Endothelial cell of umbilical vein (primary cell): ENCODE measurements at regions of chr2 and their contacts with region 1.

Region 1: GRCh38 chr2:73828818-73829570 is at the start of gene STAMBP:
- DNase-seq: peak; percentile 96
- H3K4me3 ChIP-seq: peak within 1 kb of the TSS; percentile 15 to 91 (median 74)
- H3K27ac ChIP-seq: peak within 1 kb of the TSS; percentile 79
- H3K4me1 ChIP-seq: peaks cover 17% of the 10 kb centered on the region
- H3K27me3 ChIP-seq: peaks cover 5 to 6% of the 10 kb centered on the region in 2 experiments
- CTCF ChIP-seq: no peak
- POLR2A ChIP-seq: peak; percentile 76
- total RNA-seq, gene STAMBP: 19.8 and 21.3 TPM in 2 replicates

Region 2: DNA sequence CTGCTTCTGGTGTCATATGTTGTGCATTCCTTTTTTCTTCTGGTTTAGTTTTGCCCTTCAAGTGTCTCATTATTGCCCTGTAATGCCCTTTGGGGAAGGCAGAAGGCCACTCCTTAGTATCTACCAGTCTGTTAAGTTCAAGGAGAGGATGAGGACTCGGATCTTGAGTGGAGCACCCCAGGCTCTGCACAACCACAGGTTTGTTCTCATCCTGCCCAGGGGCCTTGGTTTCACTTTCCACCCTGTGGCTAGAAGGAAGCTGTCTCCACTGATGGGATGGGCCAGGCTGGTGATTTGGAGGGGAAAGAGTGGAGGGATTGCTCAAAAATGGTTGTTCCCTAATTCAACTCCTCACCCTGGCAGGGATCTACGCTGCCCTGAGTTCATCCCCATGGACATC is 686.1 kb before region 1 on chr2:
- CTCF ChIA-PET with region 1: no interaction called
- POLR2A ChIA-PET with region 1: no interaction called
- dilution Hi-C with region 1: no loop called
- intact Hi-C with region 1: no loop called
- DNase-seq: no peak
- H3K4me3 ChIP-seq: no peak overlapping the region
- H3K27ac ChIP-seq: no peak overlapping the region
- H3K4me1 ChIP-seq: no peaks in the 10 kb centered on the region
- H3K27me3 ChIP-seq: no peaks in the 10 kb centered on the region
- CTCF ChIP-seq: no peak
- POLR2A ChIP-seq: no peak

Region 3: DNA sequence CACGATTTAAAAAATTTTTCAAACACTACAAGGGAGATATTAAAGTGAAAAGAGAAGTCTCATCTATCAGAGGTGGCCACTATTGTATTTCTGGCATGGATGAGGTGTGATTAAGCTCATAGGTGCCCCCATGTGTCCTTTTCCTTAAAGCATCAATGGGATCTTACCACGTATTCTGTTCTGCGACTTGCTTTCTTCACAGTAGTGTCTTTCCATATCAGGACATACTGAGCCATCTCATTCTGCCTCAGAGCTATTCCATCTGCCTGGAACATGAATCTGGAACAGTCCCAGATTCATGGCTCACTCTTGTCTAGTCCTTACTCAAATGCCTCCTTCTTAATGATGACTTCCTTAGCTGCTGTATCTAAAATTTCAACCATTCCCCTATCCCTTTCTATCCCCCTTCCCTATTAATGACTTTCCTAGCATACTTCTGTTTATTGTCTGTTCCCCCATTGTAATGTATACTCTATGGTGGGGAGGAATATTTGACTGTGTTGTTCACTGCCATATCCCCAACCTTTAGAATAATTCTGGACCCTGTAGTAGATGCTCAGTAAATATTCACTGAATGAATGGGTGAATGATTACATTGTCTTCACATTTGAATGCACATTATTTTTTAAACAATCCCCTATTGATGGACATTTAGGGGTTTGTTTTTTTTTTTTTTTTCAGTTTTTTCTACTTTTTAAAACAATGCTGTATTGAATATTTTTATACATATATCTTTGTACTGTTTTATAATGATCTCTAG is 10.8 kb after region 1 on chr2:
- CTCF ChIA-PET with region 1: interaction called, 10 read pairs
- POLR2A ChIA-PET with region 1: no interaction called
- dilution Hi-C with region 1: no loop called
- intact Hi-C with region 1: no loop called
- DNase-seq: no peak
- H3K4me3 ChIP-seq: no peak overlapping the region
- H3K27ac ChIP-seq: no peak overlapping the region
- H3K4me1 ChIP-seq: no peaks in the 10 kb centered on the region
- H3K27me3 ChIP-seq: no peaks in the 10 kb centered on the region
- CTCF ChIP-seq: no peak
- POLR2A ChIP-seq: no peak

Region 4: GRCh38 chr2:73926493-73927338 is 97.7 kb after region 1 on chr2 and contains the start of gene DGUOK:
- CTCF ChIA-PET with region 1: interaction called, 4 read pairs
- POLR2A ChIA-PET with region 1: no interaction called
- dilution Hi-C with region 1: no loop called
- intact Hi-C with region 1: loop called (anchors 1 kb)
- DNase-seq: peak; percentile 98
- H3K4me3 ChIP-seq: peak within 1 kb of the TSS; percentile 48 to 95 (median 91)
- H3K27ac ChIP-seq: peak within 1 kb of the TSS; percentile 98
- H3K4me1 ChIP-seq: peaks cover 13% of the 10 kb centered on the region
- H3K27me3 ChIP-seq: peaks cover 8 to 9% of the 10 kb centered on the region in 2 experiments
- CTCF ChIP-seq: no peak
- POLR2A ChIP-seq: peak; percentile 84
- total RNA-seq, gene DGUOK: 51.8 and 58.8 TPM in 2 replicates

Region 5: DNA sequence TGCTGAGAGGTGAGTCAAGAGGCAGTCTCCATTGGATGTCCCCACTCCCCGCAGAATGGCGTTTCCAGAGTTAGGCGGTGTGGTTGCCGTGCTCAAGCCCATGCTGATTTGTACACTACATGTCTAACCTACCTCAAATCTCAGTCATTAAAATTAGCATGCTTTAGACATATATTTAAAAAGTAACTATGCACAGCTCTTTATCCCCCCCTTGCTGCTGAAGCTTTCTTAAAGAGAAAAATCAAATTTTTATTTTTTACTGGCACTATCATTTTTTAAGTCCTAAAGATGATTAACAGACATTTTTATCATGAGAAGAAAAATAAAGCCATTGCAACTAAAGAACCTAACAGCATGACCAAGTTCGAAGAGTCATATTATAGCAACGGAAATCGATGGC is 275.8 kb after region 1 on chr2:
- CTCF ChIA-PET with region 1: interaction called, 11 read pairs
- POLR2A ChIA-PET with region 1: no interaction called
- dilution Hi-C with region 1: no loop called
- intact Hi-C with region 1: no loop called
- DNase-seq: no peak
- H3K4me3 ChIP-seq: no peak overlapping the region
- H3K27ac ChIP-seq: no peak overlapping the region
- H3K4me1 ChIP-seq: no peaks in the 10 kb centered on the region
- H3K27me3 ChIP-seq: no peaks in the 10 kb centered on the region
- CTCF ChIP-seq: no peak
- POLR2A ChIP-seq: no peak

Region 6: DNA sequence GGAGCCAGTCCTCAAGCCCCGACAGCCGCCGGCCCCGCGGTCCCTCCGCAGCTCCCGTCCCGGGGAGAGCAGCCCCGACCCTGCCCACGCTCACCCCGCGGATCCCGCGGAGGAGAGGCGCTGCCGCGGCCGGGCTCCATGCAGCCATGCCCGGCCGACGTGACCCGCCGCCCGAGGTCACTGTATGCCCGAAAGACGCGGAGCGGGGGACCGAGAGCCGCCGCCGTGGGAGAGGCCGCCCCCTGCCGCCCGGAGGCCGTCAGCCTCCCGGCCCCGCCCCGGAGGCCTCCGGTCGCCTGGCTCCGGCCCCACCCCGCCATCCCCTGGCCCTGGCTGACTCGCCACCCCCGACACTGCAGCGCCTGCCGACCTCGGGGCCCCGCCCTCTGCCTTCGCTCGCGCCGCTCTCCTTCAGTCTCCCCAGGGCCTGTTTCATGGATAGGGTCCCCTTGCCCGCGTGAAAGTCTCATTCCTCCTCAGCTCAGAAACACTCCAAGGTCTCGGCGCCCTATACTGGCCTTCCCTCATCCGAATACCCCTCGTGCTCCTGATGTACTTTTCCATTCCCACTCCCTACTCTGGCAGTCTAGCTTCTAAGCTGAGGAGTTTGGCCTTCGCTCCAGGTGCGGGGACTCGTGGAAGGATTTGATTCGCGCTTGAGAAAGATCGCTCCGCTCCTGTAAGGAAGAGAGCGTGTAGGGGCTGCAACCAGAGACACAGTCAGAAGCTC is 318.9 kb after region 1 on chr2 and contains the start of gene BOLA3:
- CTCF ChIA-PET with region 1: interaction called, 180 read pairs
- POLR2A ChIA-PET with region 1: no interaction called
- dilution Hi-C with region 1: no loop called
- intact Hi-C with region 1: loop called (anchors 1 kb)
- DNase-seq: peak; percentile 73
- H3K4me3 ChIP-seq: peak within 1 kb of the TSS; percentile 76 to 93 (median 77)
- H3K27ac ChIP-seq: no peak within 1 kb of the TSS
- H3K4me1 ChIP-seq: peaks cover 10% of the 10 kb centered on the region
- H3K27me3 ChIP-seq: no peaks in the 10 kb centered on the region
- CTCF ChIP-seq: peak; percentile 66 to 79
- POLR2A ChIP-seq: peak; percentile 81
- total RNA-seq, gene BOLA3: 42.4 and 42.6 TPM in 2 replicates

Region 7: GRCh38 chr2:74250189-74250631 is 421.2 kb after region 1 on chr2:
- CTCF ChIA-PET with region 1: interaction called, 7 read pairs
- POLR2A ChIA-PET with region 1: no interaction called
- dilution Hi-C with region 1: no loop called
- intact Hi-C with region 1: loop called (anchors 10 kb)
- DNase-seq: peak; percentile 37
- H3K4me3 ChIP-seq: no peak overlapping the region
- H3K27ac ChIP-seq: no peak overlapping the region
- H3K4me1 ChIP-seq: no peaks in the 10 kb centered on the region
- H3K27me3 ChIP-seq: peaks cover 0 to 2% of the 10 kb centered on the region in 2 experiments
- CTCF ChIP-seq: peak; percentile 61 to 77
- POLR2A ChIP-seq: no peak

Region 8: DNA sequence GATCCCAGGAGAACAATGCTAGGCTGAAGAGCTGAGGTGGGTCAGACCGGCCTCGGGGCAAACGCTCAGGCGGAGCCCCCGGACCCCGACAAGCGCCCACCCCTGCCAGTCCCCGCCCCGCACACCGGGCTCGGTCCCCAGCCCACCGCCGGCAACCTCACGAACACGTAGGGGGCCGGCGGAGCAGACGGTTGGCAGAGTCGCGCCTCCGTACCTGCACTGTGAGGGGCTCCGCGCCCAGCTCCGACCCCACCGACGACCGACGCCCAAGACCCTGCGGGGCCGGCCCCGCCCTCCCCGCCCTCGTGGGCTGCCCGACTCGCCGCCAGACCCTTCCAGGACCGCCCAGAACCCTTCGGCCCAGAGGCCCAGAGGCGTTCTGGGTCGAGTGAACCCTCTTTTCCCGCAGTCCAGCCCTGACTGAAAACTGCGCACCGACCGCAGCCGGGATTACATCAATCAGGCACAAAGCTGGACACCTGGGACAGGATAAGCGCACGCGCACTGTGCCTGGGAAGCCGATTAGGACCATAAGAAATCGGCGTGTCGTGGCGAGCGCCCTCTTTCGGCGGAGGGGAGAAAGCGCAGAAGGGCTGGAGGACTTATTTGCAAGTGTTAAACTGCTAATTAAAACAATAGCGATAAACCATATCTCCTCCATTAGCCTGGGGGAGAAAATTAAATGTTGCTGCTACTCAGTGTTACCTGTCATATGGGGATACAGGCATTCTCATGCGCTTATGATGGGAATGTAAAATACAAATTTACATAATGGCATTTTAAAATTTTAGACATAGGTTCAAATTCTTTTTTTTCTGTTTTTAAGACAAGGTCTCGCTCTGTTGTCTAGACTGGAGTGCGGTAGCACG is 562.8 kb after region 1 on chr2:
- CTCF ChIA-PET with region 1: interaction called, 3 read pairs
- POLR2A ChIA-PET with region 1: no interaction called
- dilution Hi-C with region 1: no loop called
- intact Hi-C with region 1: loop called (anchors 10 kb)
- DNase-seq: peak; percentile 95
- H3K4me3 ChIP-seq: peak overlapping the region; percentile 94 to 97 (median 96)
- H3K27ac ChIP-seq: peak overlapping the region; percentile 87
- H3K4me1 ChIP-seq: peaks cover 12% of the 10 kb centered on the region
- H3K27me3 ChIP-seq: no peaks in the 10 kb centered on the region
- CTCF ChIP-seq: peak; percentile 92 to 99
- POLR2A ChIP-seq: peak; percentile 54